ENCODE measurements at regions of chr4 and their contacts with region 1.

Region 1: GRCh38 chr4:156677131-156677531 is 294.5 kb downstream of the PDGFC start:
- DNase-seq: peak; percentile 71
- ATAC-seq: peak; percentile 77
- H3K4me3 ChIP-seq: peak overlapping the region; percentile 39; the same call in 1 of the 2 replicates
- H3K27ac ChIP-seq: peak overlapping the region; percentile 58
- H3K4me1 ChIP-seq: peaks cover 38% of the 10 kb centered on the region
- H3K27me3 ChIP-seq: no peaks in the 10 kb centered on the region
- CTCF ChIP-seq: peak; percentile 70

Region 2: GRCh38 chr4:156169011-156169410 is 508.1 kb before region 1 on chr4:
- CTCF ChIA-PET with region 1: no interaction called
- POLR2A ChIA-PET with region 1: no interaction called
- intact Hi-C with region 1: loop called (anchors 1 kb)
- DNase-seq: peak; percentile 75
- ATAC-seq: peak; percentile 91
- H3K4me3 ChIP-seq: no peak overlapping the region
- H3K27ac ChIP-seq: peak overlapping the region; percentile 30; the same call in 1 of the 2 replicates
- H3K4me1 ChIP-seq: peaks cover 8% of the 10 kb centered on the region; the same call in 1 of the 2 replicates
- H3K27me3 ChIP-seq: no peaks in the 10 kb centered on the region
- CTCF ChIP-seq: peak; percentile 71

Region 3: GRCh38 chr4:156294577-156294976 is 382.6 kb before region 1 on chr4:
- CTCF ChIA-PET with region 1: no interaction called
- POLR2A ChIA-PET with region 1: no interaction called
- intact Hi-C with region 1: loop called (anchors 10 kb)
- DNase-seq: peak; percentile 70
- ATAC-seq: peak; percentile 50; the same call in 1 of the 2 replicates
- H3K4me3 ChIP-seq: no peak overlapping the region
- H3K27ac ChIP-seq: peak overlapping the region; percentile 26; the same call in 1 of the 2 replicates
- H3K4me1 ChIP-seq: peaks cover 29% of the 10 kb centered on the region
- H3K27me3 ChIP-seq: no peaks in the 10 kb centered on the region
- CTCF ChIP-seq: peak; percentile 55

Region 4: DNA sequence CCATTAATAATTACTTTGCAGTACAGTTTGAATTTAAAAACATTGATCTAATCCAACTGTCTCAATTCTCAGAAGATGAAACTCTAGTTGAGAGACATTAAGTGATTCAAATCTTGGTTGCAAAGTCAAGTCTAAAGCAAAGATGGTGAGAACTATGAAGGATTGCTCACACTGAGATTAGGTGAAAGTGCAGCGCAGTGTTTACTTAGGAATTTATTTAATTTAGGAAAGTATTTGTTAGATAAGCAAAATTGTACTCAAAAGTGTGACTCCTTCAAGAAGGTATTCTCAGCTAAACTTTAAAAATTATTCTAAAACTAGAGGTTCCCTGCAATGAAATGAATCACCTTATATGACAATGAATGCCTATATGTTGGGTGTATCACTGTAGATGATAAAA is 160.4 kb before region 1 on chr4:
- CTCF ChIA-PET with region 1: no interaction called
- POLR2A ChIA-PET with region 1: no interaction called
- intact Hi-C with region 1: no loop called
- DNase-seq: no peak
- ATAC-seq: no peak
- H3K4me3 ChIP-seq: no peak overlapping the region
- H3K27ac ChIP-seq: no peak overlapping the region
- H3K4me1 ChIP-seq: no peaks in the 10 kb centered on the region
- H3K27me3 ChIP-seq: no peaks in the 10 kb centered on the region
- CTCF ChIP-seq: no peak

Region 5: DNA sequence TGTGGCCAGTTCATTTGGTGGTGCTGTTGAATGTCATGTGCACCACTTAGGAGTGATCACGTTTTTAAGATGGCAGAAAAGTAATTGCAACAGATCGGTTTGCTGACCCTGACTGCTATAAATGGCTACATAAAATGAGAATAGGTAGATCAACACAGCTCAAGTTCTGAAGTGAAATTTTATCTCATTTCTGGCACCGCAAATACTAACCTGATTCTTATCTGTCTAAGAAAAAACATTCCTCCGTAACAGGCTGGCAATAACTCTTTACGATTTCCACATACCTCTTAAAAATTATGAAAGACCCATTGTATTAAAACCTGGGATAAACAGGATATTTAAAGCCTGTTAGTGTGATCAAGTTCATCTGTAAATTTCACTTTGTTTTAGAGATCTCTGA is 93.0 kb before region 1 on chr4:
- CTCF ChIA-PET with region 1: no interaction called
- POLR2A ChIA-PET with region 1: interaction called, 3 read pairs
- intact Hi-C with region 1: loop called (anchors 5 kb)
- DNase-seq: peak; percentile 76
- ATAC-seq: peak; percentile 82
- H3K4me3 ChIP-seq: peak overlapping the region; percentile 21; the same call in 1 of the 2 replicates
- H3K27ac ChIP-seq: peak overlapping the region; percentile 63
- H3K4me1 ChIP-seq: peaks cover 31% of the 10 kb centered on the region
- H3K27me3 ChIP-seq: no peaks in the 10 kb centered on the region
- CTCF ChIP-seq: no peak

Region 6: GRCh38 chr4:157045507-157046127 is 368.5 kb after region 1 on chr4:
- CTCF ChIA-PET with region 1: no interaction called
- POLR2A ChIA-PET with region 1: no interaction called
- intact Hi-C with region 1: loop called (anchors 1 kb)
- DNase-seq: peak; percentile 67
- ATAC-seq: peak; percentile 85
- H3K4me3 ChIP-seq: no peak overlapping the region
- H3K27ac ChIP-seq: no peak overlapping the region
- H3K4me1 ChIP-seq: no peaks in the 10 kb centered on the region
- H3K27me3 ChIP-seq: no peaks in the 10 kb centered on the region
- CTCF ChIP-seq: peak; percentile 82